ENCODE measurements at regions of chr14 and their contacts with region 1.

Region 1: DNA sequence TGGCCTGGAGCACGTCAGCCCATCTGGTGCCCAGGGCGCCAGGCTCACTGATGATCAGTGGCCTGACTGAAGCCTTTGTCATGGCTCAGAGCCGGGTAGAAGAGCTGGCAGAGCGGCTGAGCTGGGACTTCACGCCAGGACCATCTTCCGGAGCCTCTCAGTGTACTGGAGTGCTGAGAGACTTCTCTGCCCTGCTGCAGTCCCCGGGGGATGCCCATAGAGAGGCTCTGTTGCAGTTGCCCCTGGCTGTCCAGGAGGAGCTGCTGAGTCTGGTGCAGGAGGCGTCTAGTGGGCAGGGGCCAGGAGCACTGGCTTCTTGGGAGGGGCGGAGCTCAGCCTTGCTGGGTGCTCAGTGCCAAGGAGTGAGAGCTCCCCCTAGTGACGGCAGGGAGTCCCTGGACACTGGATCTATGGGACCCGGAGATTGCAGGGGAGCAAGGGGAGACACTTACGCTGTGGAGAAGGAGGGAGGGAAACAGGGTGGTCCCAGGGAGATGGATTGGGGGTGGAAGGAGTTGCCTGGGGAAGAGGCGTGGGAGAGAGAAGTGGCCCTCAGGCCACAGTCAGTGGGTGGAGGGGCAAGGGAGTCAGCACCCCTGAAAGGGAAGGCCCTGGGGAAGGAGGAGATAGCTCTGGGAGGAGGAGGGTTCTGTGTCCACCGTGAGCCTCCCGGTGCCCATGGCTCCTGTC is 2.0 kb downstream of the KHNYN start:
- DNase-seq: peak; percentile 96
- ATAC-seq: peak; percentile 70
- H3K4me3 Mint-ChIP-seq: peak overlapping the region; percentile 94
- H3K27ac Mint-ChIP-seq: peak overlapping the region; percentile 97
- H3K4me1 Mint-ChIP-seq: peaks cover 31% of the 10 kb centered on the region
- H3K27me3 Mint-ChIP-seq: no peaks in the 10 kb centered on the region

Region 2: GRCh38 chr14:24141097-24141880 is 290.4 kb before region 1 on chr14 and contains the start of gene EMC9:
- CTCF ChIA-PET with region 1: interaction called, 3 read pairs
- POLR2A ChIA-PET with region 1: interaction called, 11 read pairs
- intact Hi-C with region 1: loop called (anchors 2 to 5 kb)
- DNase-seq: peak; percentile 100
- ATAC-seq: peak; percentile 87
- H3K4me3 Mint-ChIP-seq: peak within 1 kb of the TSS; percentile 88
- H3K27ac Mint-ChIP-seq: peak within 1 kb of the TSS; percentile 97
- H3K4me1 Mint-ChIP-seq: peaks cover 66% of the 10 kb centered on the region
- H3K27me3 Mint-ChIP-seq: no peaks in the 10 kb centered on the region
- total RNA-seq, gene EMC9: 36.9 to 46.7 TPM

Region 3: GRCh38 chr14:24241829-24242443 is 189.8 kb before region 1 on chr14:
- CTCF ChIA-PET with region 1: interaction called, 21 read pairs
- POLR2A ChIA-PET with region 1: interaction called, 13 read pairs
- intact Hi-C with region 1: loop called in 1 of 2 experiments (anchors 1 kb)
- DNase-seq: peak; percentile 97
- ATAC-seq: peak; percentile 83
- H3K4me3 Mint-ChIP-seq: peak overlapping the region; percentile 94
- H3K27ac Mint-ChIP-seq: peak overlapping the region; percentile 99
- H3K4me1 Mint-ChIP-seq: peaks cover 55% of the 10 kb centered on the region
- H3K27me3 Mint-ChIP-seq: no peaks in the 10 kb centered on the region

Region 4: GRCh38 chr14:24310646-24311604 is 120.8 kb before region 1 on chr14 and contains the start of gene LTB4R:
- CTCF ChIA-PET with region 1: interaction called, 25 read pairs
- POLR2A ChIA-PET with region 1: no interaction called
- intact Hi-C with region 1: loop called in 1 of 2 experiments (anchors 1 kb)
- DNase-seq: peak; percentile 81
- ATAC-seq: peak; percentile 83
- H3K4me3 Mint-ChIP-seq: peak within 1 kb of the TSS; percentile 70
- H3K27ac Mint-ChIP-seq: peak within 1 kb of the TSS; percentile 77
- H3K4me1 Mint-ChIP-seq: peaks cover 61% of the 10 kb centered on the region
- H3K27me3 Mint-ChIP-seq: no peaks in the 10 kb centered on the region
- total RNA-seq, gene LTB4R: 10.1 to 14.2 TPM

Region 5: GRCh38 chr14:24339284-24340151 is 92.2 kb before region 1 on chr14 and contains the start of gene RIPK3:
- CTCF ChIA-PET with region 1: interaction called, 201 read pairs
- POLR2A ChIA-PET with region 1: interaction called, 31 read pairs
- intact Hi-C with region 1: loop called in 1 of 2 experiments (anchors 1 kb)
- DNase-seq: peak; percentile 82
- ATAC-seq: peak; percentile 95
- H3K4me3 Mint-ChIP-seq: peak within 1 kb of the TSS; percentile 85
- H3K27ac Mint-ChIP-seq: peak within 1 kb of the TSS; percentile 81
- H3K4me1 Mint-ChIP-seq: peaks cover 17% of the 10 kb centered on the region
- H3K27me3 Mint-ChIP-seq: peaks cover 15% of the 10 kb centered on the region
- total RNA-seq, gene RIPK3: 8.9 to 9.4 TPM

Region 6: DNA sequence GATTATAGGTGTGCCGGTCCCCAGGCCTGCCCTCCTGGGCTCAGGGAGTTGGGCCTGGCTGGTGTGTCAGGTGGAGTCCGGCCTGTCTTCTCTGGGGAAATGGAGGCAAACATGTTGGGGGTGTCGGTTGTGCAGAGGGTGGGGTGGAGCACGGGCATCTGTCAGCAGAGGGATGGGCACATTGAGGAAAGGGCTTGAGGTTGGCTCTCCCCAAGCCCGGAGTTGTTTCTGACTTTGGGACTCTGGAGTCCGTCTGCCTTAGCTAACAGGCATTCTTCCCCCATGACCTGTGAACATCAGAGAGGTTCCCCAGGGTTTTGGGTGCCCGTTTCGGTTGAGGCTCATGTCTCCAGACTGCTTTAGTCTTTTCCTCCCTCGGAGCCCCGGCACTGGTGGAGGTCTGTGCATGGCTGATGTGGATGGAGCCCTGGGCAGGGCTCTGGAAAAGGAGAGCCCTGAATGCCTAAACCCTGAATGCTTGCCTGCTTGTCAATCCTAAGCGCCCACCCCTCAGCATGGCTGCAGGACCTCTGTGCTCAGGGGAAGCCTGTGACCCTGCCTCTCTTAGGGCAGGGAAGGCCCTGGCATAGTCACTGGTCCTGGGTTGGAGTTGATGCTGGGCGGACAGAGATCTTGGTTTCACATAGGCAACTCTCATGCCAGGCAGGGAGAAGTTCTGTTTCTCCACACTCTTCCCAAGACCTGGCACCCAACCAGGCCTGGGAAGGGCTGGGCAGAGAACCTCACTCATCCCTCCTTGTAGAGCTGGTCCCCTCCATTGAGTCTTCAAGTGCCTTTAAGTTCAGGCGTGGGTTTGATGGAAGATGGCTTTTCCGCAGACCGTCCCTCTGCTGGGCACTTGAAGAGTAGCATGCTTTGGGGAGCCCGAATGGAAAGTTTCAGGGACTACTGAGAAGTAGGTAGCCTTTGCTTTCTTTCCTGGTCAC is 20.0 kb before region 1 on chr14:
- CTCF ChIA-PET with region 1: interaction called, 10 read pairs
- POLR2A ChIA-PET with region 1: interaction called, 3 read pairs
- intact Hi-C with region 1: no loop called
- DNase-seq: peak; percentile 54
- ATAC-seq: peak; percentile 70
- H3K4me3 Mint-ChIP-seq: no peak overlapping the region
- H3K27ac Mint-ChIP-seq: no peak overlapping the region
- H3K4me1 Mint-ChIP-seq: no peaks in the 10 kb centered on the region
- H3K27me3 Mint-ChIP-seq: no peaks in the 10 kb centered on the region

Measured in activated CD4-positive, alpha-beta T cell treated with anti-CD3 and anti-CD28 coated beads for 36 hours (primary cell).